Esophagus muscularis mucosa (tissue), 4 donors: ENCODE measurements at regions of chr10 and their contacts with region 1.

Region 1: GRCh38 chr10:17847585-17848296 is 38.6 kb downstream of the MRC1 start:
- DNase-seq: no peak
- H3K4me3 ChIP-seq: no peak overlapping the region
- H3K27ac ChIP-seq: no peak overlapping the region
- H3K4me1 ChIP-seq: peaks cover 0 to 8% (median 2%) of the 10 kb centered on the region in 4 donors
- H3K27me3 ChIP-seq: no peaks in the 10 kb centered on the region
- CTCF ChIP-seq: peak; percentile 52 to 58 (median 57)
- EP300 ChIP-seq: no peak
- POLR2A ChIP-seq: no peak

Region 2: DNA sequence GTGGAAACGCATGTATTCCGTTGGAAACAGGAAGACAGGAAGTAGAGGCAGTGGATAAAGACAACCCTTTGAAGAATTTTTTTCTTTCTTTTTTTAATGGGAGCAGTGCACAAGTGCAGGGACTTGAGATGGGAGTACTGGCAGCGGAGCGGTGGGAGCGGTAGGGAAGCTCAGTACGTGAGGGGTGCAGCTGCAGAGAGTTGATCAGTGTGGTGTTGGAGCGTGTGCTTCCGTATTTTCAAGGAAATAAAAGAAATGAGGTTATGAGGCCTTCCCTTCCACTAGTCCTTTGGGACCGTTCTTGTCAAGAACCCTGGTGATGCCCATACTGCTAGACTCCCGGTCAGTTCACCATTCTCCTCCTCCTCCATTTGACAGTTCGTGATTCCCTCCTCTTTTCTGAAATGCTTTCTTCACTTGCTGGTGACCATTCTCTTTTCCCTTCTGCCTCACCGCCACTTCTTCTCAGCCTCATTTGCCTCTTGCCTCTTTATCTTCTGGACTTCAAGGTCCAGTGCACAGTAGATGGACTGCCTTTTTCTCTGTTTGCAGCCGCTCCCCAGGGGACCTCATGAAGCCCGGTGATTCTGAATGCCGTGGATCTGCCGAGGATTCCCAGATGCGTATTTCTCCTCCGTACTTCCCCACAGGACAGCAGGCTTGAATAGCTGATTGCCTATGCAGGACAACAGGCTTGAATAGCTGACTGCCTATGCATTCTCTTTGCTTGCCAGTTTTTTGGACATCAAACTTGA is 134.8 kb before region 1 on chr10:
- intact Hi-C with region 1: no loop called
- DNase-seq: no peak
- H3K4me3 ChIP-seq: peak overlapping the region in 2 of 4 donors; percentile 1 to 8
- H3K27ac ChIP-seq: no peak overlapping the region
- H3K4me1 ChIP-seq: no peaks in the 10 kb centered on the region
- H3K27me3 ChIP-seq: no peaks in the 10 kb centered on the region
- CTCF ChIP-seq: no peak
- EP300 ChIP-seq: no peak
- POLR2A ChIP-seq: no peak

Region 3: GRCh38 chr10:17742918-17743317 is 104.8 kb before region 1 on chr10:
- intact Hi-C with region 1: no loop called
- DNase-seq: peak; percentile 91
- H3K4me3 ChIP-seq: peak overlapping the region in 2 of 4 donors; percentile 8 to 15
- H3K27ac ChIP-seq: no peak overlapping the region
- H3K4me1 ChIP-seq: peaks cover 5 to 7% (median 7%) of the 10 kb centered on the region in 4 donors
- H3K27me3 ChIP-seq: no peaks in the 10 kb centered on the region
- CTCF ChIP-seq: peak; percentile 77 to 98 (median 92)
- EP300 ChIP-seq: no peak
- POLR2A ChIP-seq: no peak

Region 4: DNA sequence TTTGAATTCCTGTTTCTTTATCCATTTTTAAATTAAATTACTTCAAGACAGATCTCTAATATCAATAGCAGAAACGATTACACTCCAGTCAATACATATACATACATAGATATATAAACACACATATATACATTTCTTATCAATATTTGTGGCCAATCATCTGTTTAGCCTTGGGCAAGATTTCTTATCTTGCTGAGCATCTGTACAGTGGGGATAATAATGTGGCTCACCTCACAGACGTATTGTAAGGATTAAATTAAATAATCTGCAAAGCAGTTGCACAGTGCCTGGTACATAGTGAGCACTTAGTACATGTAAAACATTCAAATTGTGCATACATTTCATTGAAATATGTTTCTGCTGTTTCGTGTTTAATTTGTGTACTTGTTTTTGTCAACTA is 275.0 kb after region 1 on chr10:
- intact Hi-C with region 1: loop called (anchors 10 kb)
- DNase-seq: no peak
- H3K4me3 ChIP-seq: no peak overlapping the region
- H3K27ac ChIP-seq: no peak overlapping the region
- H3K4me1 ChIP-seq: peaks cover 3 to 13% (median 7%) of the 10 kb centered on the region in 4 donors
- H3K27me3 ChIP-seq: no peaks in the 10 kb centered on the region
- CTCF ChIP-seq: no peak
- EP300 ChIP-seq: no peak
- POLR2A ChIP-seq: no peak

Region 5: GRCh38 chr10:18214691-18215563 is 367.2 kb after region 1 on chr10:
- intact Hi-C with region 1: loop called (anchors 5 kb)
- DNase-seq: no peak
- H3K4me3 ChIP-seq: peak overlapping the region in 1 of 4 donors; percentile 16
- H3K27ac ChIP-seq: peak overlapping the region in 2 of 4 donors; percentile 10 to 21
- H3K4me1 ChIP-seq: peaks cover 14 to 93% (median 91%) of the 10 kb centered on the region in 4 donors
- H3K27me3 ChIP-seq: no peaks in the 10 kb centered on the region
- CTCF ChIP-seq: peak; percentile 78 to 86 (median 84)
- EP300 ChIP-seq: no peak
- POLR2A ChIP-seq: no peak